ENCODE measurements at regions of chr10 and their contacts with region 1.

Region 1: GRCh38 chr10:132904181-132904819 is 38.1 kb downstream of the CFAP46 start:
- DNase-seq: peak; percentile 46 to 76
- ATAC-seq: peak; percentile 58 to 85; a peak in 5 of 6 replicates
- H3K4me3 ChIP-seq: no peak overlapping the region
- H3K27ac ChIP-seq: no peak overlapping the region
- H3K4me1 ChIP-seq: no peaks in the 10 kb centered on the region
- CTCF ChIP-seq: peak; percentile 62
- EP300 ChIP-seq: no peak
- POLR2A ChIP-seq: no peak
- RAD21 ChIP-seq: peak; percentile 67 to 78

Region 2: DNA sequence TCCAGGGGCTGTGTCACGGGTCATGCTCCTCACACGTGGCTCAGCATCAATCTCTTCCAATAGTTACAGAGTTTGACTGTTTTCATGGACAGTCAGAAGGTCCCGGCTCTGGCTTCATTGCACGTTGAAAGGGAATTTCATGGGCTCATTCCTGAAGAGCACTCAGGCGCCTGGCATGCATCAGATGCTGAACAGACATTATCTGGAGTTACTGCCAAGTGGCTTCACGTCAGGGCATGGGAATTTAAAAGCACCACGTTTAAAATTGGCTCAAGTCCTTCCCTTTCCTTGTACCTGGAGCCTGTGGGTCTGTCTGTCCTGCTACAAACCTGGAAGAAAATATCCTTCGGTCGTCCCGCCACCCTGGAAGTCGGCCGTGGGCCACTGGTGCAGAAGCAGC is 12.3 kb before region 1 on chr10:
- CTCF ChIA-PET with region 1: interaction called, 11 read pairs
- POLR2A ChIA-PET with region 1: no interaction called
- DNase-seq: no peak
- ATAC-seq: no peak
- H3K4me3 ChIP-seq: no peak overlapping the region
- H3K27ac ChIP-seq: no peak overlapping the region
- H3K4me1 ChIP-seq: no peaks in the 10 kb centered on the region
- CTCF ChIP-seq: no peak
- EP300 ChIP-seq: no peak
- POLR2A ChIP-seq: no peak
- RAD21 ChIP-seq: no peak